Sciatic nerve (tissue), 2 donors: ENCODE measurements at regions of chr19 and their contacts with region 1.

Region 1: DNA sequence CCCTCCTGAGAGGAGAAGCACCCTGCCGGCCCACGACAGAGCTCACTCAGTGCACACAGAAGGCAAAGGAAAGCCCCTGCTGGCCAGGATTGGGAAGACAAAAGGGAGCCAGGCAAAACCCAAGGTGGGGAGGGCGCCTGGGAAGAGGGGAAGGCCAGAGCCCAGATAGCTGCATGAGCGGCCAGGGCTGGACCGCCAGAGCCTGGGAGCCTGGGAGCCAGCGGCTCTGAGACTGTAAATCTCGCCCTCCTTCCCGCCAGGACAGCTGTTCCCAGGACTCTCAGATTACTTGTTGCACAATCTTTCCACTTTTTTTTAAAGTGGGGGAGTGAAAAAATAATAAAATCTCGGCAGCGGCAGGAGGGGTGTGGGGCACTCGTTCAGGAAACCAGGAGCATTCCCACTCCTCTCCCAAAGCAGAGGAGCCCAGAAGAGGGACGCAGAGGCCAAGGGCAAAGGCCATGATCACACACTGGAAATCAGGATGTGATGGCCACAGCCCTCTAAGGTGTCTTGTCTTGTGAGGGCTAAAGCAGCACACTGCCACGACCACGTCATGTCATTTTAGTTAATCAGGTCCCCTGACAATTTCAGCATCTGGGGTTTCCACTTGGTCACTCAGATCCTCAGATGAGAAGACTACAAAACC is 19.6 kb upstream of the EPHX3 start:
- DNase-seq: peak; percentile 87
- ATAC-seq: peak; percentile 87

Region 2: GRCh38 chr19:15177269-15178116 is 74.4 kb before region 1 on chr19:
- intact Hi-C with region 1: loop called (anchors 5 kb)
- DNase-seq: peak; percentile 91
- ATAC-seq: peak; percentile 75

Region 3: DNA sequence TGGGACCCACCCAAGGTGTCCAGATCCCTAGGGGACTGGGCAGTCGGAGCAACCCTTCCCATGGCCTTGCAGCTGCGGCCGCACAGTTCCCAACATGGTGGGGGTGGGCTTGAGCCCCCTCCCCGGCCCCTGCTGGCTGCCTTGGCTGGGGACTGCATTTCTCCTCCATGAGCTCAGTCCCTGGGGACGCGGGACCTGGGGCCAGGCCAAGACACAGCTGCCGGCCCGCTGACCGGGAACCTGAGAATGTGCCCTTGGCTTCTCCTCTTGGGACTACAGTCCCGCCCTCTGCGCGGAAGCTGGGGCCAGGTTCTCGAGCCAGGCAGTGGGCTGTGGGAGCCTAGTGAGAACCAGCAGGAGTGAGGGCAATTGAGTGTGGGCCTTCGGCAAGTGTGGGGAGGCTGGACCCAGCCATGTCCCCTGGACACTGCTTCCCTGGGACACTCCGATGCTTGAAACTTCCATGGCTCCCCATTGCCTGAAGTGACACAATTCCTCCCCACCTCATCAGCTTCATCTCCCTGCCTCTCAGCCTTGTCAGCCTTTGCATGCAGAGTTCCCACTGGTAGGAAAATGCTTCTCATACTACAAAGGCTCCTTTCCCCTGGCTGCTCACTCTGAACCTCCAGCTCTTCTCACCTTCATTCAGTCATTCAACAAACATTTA is 38.0 kb before region 1 on chr19:
- intact Hi-C with region 1: no loop called
- DNase-seq: no peak
- ATAC-seq: peak; percentile 48

Region 4: GRCh38 chr19:15264061-15264932 is 12.4 kb after region 1 on chr19:
- intact Hi-C with region 1: no loop called
- DNase-seq: peak; percentile 89
- ATAC-seq: peak; percentile 18

Region 5: GRCh38 chr19:15332311-15332996 is 80.6 kb after region 1 on chr19 and contains the start of gene BRD4:
- intact Hi-C with region 1: no loop called
- DNase-seq: peak; percentile 87
- ATAC-seq: peak; percentile 85
- total RNA-seq, gene BRD4: 110 TPM